Activated naive CD4-positive, alpha-beta T cell treated with anti-CD3 and anti-CD28 coated beads for 36 hours (primary cell): ENCODE measurements at regions of chr3 and their contacts with region 1.

Region 1: DNA sequence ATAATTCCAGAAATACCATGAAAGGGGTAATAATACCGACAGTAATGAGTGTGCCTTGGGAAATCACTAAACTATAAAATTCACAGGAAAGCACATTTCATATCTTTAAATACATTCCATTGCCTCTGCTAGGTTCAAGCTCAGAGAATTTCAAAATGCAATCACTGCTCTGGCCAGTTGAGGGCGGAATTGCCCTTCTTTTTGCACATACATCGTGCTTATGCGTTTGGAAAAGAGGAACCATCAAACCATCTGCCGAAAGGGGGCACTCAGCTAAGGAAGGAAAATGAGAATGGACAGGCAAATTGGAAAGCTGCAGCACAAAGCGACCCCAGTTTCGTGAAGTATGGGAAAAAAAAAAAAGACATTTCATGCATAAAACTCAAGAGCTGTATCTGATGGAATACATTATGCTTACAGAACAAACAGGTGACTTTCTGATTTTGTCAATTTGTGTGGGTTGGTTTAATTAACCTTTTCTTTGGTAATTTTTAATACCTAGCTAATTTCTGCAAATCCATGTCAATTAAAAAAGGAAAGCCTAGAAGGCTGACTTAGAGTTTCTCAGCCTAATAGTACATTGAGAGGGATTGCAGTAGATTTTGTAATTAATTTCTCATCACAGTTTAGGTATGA is 61.4 kb downstream of the TUSC7 start:
- DNase-seq: peak; percentile 73
- H3K4me3 Mint-ChIP-seq: no peak overlapping the region
- H3K27ac Mint-ChIP-seq: no peak overlapping the region
- H3K4me1 Mint-ChIP-seq: no peaks in the 10 kb centered on the region
- H3K27me3 Mint-ChIP-seq: no peaks in the 10 kb centered on the region

Region 2: DNA sequence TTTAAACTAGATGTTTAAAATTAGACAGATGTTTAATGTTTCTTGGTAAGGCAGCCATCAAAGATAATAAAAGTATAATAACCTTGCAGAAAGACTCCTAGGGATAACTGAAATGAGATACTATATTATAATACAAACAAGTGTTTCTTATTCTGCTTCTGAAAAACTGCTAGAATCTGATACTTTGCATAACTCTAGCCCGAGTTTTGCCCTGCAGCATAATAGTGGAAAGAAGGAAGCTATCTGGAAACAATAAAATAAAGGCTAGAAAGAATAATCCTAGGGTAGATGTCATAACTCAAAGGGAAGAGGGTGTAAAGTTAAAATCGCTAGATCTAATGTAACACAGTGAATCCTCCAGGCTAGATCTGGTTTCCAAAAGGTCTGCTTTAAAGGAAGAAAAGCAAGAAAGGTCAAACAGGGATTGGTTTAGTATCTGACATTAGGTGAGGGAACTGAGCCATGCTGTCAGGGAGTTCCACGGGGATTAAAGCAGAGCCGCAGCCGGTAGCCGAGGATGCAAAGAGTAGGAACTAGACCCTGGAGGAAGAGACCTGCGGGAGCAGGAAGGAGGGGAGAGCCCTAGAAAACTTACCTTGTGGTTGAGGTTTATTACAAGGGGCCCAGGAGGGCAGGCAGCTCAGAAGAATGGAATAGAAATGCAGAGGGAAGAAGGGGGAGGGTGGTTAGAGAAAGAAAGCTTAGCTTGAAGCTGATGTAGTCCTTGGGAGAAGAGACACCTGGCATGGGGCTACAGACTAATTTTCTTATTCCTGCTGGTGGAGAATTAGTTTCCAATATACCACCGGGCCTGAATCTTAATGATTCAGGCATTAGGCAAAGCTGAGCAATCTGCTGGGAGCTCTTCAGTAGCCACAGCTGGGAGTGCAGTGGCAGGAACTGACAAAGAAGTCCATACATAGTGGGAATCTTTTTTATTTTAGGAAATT is 107.5 kb before region 1 on chr3:
- CTCF ChIA-PET with region 1: no interaction called
- intact Hi-C with region 1: no loop called
- DNase-seq: no peak
- H3K4me3 Mint-ChIP-seq: no peak overlapping the region
- H3K27ac Mint-ChIP-seq: no peak overlapping the region
- H3K4me1 Mint-ChIP-seq: no peaks in the 10 kb centered on the region
- H3K27me3 Mint-ChIP-seq: peaks cover 3% of the 10 kb centered on the region

Region 3: GRCh38 chr3:117074826-117075225 is 303.9 kb after region 1 on chr3:
- CTCF ChIA-PET with region 1: no interaction called
- intact Hi-C with region 1: no loop called
- DNase-seq: no peak
- H3K4me3 Mint-ChIP-seq: no peak overlapping the region
- H3K27ac Mint-ChIP-seq: no peak overlapping the region
- H3K4me1 Mint-ChIP-seq: no peaks in the 10 kb centered on the region
- H3K27me3 Mint-ChIP-seq: no peaks in the 10 kb centered on the region

Region 4: DNA sequence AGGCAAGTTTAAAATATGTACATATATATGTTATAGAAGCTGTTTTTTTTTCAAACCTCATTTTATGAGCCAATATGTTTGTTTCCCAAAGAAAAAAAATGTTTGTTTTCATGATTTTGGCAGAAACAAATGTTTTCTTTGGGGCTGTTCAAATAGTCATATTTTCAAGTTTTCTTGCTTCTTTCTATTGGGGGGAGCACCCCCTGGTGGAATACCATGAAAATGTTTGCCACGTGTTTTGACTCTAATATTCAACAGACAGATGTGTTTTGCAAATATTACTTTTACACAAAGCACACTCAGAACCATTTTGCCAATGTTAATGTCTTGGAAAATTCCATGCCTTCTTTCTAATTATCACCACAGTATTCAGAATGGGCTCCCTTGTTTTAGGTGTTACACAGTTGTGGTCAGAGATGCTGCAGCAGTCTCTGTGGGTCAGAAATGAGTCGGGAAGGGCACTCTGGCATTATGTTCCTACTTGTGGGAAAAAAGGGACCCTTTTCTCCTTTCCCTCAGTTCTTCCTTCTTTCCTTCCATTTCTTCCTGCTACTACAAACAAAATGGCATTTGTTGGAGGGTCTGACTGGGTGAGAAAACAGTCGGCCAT is 755.6 kb after region 1 on chr3:
- CTCF ChIA-PET with region 1: interaction called, 3 read pairs
- intact Hi-C with region 1: loop called (anchors 1 kb)
- DNase-seq: no peak
- H3K4me3 Mint-ChIP-seq: no peak overlapping the region
- H3K27ac Mint-ChIP-seq: no peak overlapping the region
- H3K4me1 Mint-ChIP-seq: no peaks in the 10 kb centered on the region
- H3K27me3 Mint-ChIP-seq: no peaks in the 10 kb centered on the region

Region 5: DNA sequence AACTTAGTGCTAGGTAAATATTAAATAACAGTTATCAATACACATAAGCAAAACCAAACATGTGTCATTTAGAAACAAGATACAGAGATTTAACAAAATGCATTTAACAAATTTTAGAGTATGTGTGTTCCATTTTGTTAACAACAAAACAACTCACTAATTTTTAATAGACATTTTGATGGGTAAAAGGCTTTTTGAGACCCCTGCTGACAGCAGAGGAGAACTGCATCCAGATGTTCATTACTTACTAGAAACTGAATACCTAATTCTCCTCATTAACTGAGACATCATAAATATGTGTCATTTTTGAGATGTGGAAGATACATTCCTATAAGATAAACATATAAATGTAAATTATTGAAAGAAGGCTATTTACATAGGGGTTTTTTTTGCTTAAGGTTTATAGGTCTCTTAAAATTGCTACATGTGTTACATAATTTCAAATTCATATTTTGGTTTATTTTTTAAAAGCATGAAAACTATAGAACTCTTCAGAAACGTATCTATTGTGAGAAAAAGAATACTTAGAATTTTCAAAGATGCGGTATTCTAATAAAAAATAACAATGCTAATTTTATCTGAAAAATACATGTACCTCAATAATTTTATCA is 948.5 kb after region 1 on chr3:
- CTCF ChIA-PET with region 1: no interaction called
- intact Hi-C with region 1: loop called (anchors 1 kb)
- DNase-seq: no peak
- H3K4me3 Mint-ChIP-seq: no peak overlapping the region
- H3K27ac Mint-ChIP-seq: no peak overlapping the region
- H3K4me1 Mint-ChIP-seq: no peaks in the 10 kb centered on the region
- H3K27me3 Mint-ChIP-seq: peaks cover 2% of the 10 kb centered on the region

Region 6: GRCh38 chr3:117997201-117998049 is 1226.5 kb after region 1 on chr3:
- CTCF ChIA-PET with region 1: no interaction called
- intact Hi-C with region 1: loop called (anchors 1 kb)
- DNase-seq: peak; percentile 62
- H3K4me3 Mint-ChIP-seq: no peak overlapping the region
- H3K27ac Mint-ChIP-seq: no peak overlapping the region
- H3K4me1 Mint-ChIP-seq: no peaks in the 10 kb centered on the region
- H3K27me3 Mint-ChIP-seq: peaks cover 11% of the 10 kb centered on the region

Region 7: DNA sequence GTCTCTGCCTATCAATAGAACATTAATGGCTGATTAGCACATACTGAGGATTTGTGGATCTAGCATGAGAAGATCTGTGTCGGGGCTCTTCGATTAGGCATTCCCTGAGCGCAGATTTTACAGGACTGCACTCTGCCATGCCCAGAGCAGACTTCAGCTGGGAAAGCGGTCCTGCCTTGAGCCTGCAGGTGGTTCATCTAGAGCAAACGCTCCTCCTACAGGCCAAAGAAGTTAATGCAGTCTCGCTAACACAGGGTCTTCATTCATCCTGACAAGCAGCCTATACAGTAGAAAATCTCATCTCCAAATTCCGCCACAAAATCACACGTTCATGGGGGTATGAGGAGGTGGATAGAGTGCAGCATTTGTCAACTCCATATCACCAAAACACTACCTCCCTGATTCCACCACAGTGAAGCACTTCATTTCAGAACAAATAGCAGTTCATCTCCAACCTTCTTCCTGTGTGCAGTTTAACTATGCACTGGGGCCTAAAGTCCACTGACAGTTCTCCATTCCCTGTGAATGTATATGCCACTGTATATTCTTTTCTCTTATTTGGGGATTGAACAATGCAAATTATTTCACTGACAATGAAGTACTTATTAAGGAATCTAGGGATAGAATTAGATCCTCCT is 1857.9 kb after region 1 on chr3:
- CTCF ChIA-PET with region 1: no interaction called
- intact Hi-C with region 1: loop called (anchors 5 kb)
- DNase-seq: peak; percentile 38
- H3K4me3 Mint-ChIP-seq: no peak overlapping the region
- H3K27ac Mint-ChIP-seq: no peak overlapping the region
- H3K4me1 Mint-ChIP-seq: no peaks in the 10 kb centered on the region
- H3K27me3 Mint-ChIP-seq: no peaks in the 10 kb centered on the region